ENCODE measurements at regions of chrX and their contacts with region 1.

Region 1: GRCh38 chrX:46903458-46904242 is 8.6 kb upstream of the JADE3 start:
- H3K4me3 Mint-ChIP-seq: peak overlapping the region; percentile 72
- H3K27ac Mint-ChIP-seq: no peak overlapping the region
- H3K4me1 Mint-ChIP-seq: no peaks in the 10 kb centered on the region
- H3K27me3 Mint-ChIP-seq: no peaks in the 10 kb centered on the region

Region 2: GRCh38 chrX:46978341-46979291 is 75.0 kb after region 1 on chrX:
- intact Hi-C with region 1: loop called (anchors 2 kb)
- H3K4me3 Mint-ChIP-seq: no peak overlapping the region
- H3K27ac Mint-ChIP-seq: no peak overlapping the region
- H3K4me1 Mint-ChIP-seq: no peaks in the 10 kb centered on the region
- H3K27me3 Mint-ChIP-seq: no peaks in the 10 kb centered on the region

Region 3: DNA sequence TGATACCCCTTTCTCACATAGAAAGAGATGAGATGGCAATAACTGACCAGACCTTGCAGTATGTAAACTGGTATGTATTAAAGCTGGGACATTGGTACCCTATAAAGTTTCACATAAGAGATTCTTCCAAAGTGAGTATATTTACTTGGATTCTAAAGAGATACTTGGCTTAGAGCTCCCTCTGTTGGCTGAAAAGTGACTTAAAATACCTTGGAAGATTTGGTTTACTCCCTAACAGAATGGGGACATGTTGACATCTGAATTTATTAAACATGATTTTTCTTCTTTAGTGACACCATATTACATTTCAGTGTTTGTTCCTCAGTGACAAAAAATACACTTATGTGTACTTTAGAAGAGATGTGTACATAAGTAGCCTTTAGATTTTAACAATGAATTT is 126.7 kb after region 1 on chrX:
- intact Hi-C with region 1: loop called (anchors 10 kb)
- H3K4me3 Mint-ChIP-seq: no peak overlapping the region
- H3K27ac Mint-ChIP-seq: no peak overlapping the region
- H3K4me1 Mint-ChIP-seq: no peaks in the 10 kb centered on the region
- H3K27me3 Mint-ChIP-seq: no peaks in the 10 kb centered on the region

Region 4: GRCh38 chrX:47158131-47158530 is 254.5 kb after region 1 on chrX:
- intact Hi-C with region 1: no loop called
- H3K4me3 Mint-ChIP-seq: no peak overlapping the region
- H3K27ac Mint-ChIP-seq: no peak overlapping the region
- H3K4me1 Mint-ChIP-seq: no peaks in the 10 kb centered on the region
- H3K27me3 Mint-ChIP-seq: no peaks in the 10 kb centered on the region

Measured in dendritic cell treated with granulocyte-macrophage colony-stimulating factor and Interleukin-4, amounts not matched to agents 40 ng/mL and 50 ng/mL, for 4 days (primary cell).